ENCODE measurements at regions of chr9 and their contacts with region 1.

Region 1: GRCh38 chr9:89743573-89744361 is 139.0 kb downstream of the GADD45G start:
- DNase-seq: peak; percentile 23 to 82 (median 76)
- ATAC-seq: peak; percentile 88
- H3K4me3 ChIP-seq: peak overlapping the region; percentile 35
- H3K4me3 Mint-ChIP-seq: peak overlapping the region; percentile 62 to 85 (median 76)
- H3K27ac ChIP-seq: peak overlapping the region; percentile 37
- H3K27ac Mint-ChIP-seq: peak overlapping the region; percentile 49 to 94 (median 83)
- H3K4me1 ChIP-seq: peaks cover 18 to 65% of the 10 kb centered on the region in 2 donors
- H3K4me1 Mint-ChIP-seq: peaks cover 48 to 91% (median 87%) of the 10 kb centered on the region in 7 donors
- H3K27me3 ChIP-seq: no peaks in the 10 kb centered on the region
- H3K27me3 Mint-ChIP-seq: no peaks in the 10 kb centered on the region

Region 2: GRCh38 chr9:88025399-88026117 is 1718.2 kb before region 1 on chr9:
- CTCF ChIA-PET with region 1: no interaction called
- POLR2A ChIA-PET with region 1: no interaction called
- intact Hi-C with region 1: no loop called
- DNase-seq: no peak
- ATAC-seq: no peak
- H3K4me3 ChIP-seq: no peak overlapping the region
- H3K4me3 Mint-ChIP-seq: no peak overlapping the region
- H3K27ac ChIP-seq: no peak overlapping the region
- H3K27ac Mint-ChIP-seq: no peak overlapping the region
- H3K4me1 ChIP-seq: no peaks in the 10 kb centered on the region
- H3K4me1 Mint-ChIP-seq: peaks cover 0 to 1% (median 0%) of the 10 kb centered on the region in 7 donors
- H3K27me3 ChIP-seq: no peaks in the 10 kb centered on the region
- H3K27me3 Mint-ChIP-seq: peaks cover 0 to 5% (median 0%) of the 10 kb centered on the region in 5 donors

Region 3: DNA sequence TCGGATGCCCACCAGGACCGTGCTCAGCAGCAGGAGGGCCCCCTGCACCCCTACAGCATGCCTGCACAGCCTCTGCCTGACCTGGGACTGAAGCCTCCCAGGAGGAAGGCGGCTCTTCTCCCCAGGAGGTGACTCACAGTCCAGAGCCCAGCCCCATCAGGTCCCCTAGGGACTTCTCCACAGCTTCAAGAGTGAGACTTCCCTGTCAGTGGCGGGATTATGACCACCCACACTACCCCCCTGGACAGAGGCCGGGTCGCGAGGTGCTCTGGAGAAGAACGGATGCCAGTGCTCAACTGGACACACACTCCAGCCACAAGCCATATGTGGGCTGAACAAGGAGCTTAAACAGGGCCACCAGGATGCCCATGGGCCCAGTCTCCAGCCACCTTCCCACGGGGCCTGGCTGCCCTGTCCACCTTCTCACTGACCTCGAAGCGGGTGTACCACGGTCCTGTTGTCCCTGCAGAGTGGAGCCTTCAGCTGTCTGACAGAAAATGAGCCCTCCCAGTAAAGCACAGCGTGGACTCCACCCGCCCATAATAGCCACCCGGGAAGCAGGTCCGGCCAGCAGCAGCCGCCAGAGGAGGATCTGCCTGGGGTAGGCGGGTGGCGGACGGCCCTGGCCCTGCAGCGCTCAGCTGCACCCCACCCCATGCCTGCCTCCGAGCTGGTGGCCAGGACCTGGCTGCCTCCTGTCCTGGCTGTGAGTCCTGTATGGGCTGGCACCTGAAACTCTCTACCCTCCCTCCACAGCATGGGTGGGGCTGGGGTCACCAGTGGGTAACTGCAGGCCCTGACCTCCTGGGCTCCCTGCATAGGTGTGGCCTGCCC is 300.6 kb before region 1 on chr9:
- CTCF ChIA-PET with region 1: no interaction called
- POLR2A ChIA-PET with region 1: interaction called, 3 read pairs
- intact Hi-C with region 1: loop called in 1 of 2 experiments (anchors 5 kb)
- DNase-seq: no peak
- ATAC-seq: peak; percentile 36
- H3K4me3 ChIP-seq: no peak overlapping the region
- H3K4me3 Mint-ChIP-seq: peak overlapping the region in 3 of 10 donors; percentile 54 to 82 (median 67)
- H3K27ac ChIP-seq: peak overlapping the region; percentile 72
- H3K27ac Mint-ChIP-seq: peak overlapping the region; percentile 76 to 99 (median 96)
- H3K4me1 ChIP-seq: peaks cover 84 to 89% of the 10 kb centered on the region in 2 donors
- H3K4me1 Mint-ChIP-seq: peaks cover 62 to 91% (median 85%) of the 10 kb centered on the region in 7 donors
- H3K27me3 ChIP-seq: no peaks in the 10 kb centered on the region
- H3K27me3 Mint-ChIP-seq: no peaks in the 10 kb centered on the region

Region 4: GRCh38 chr9:89648247-89649000 is 95.3 kb before region 1 on chr9:
- CTCF ChIA-PET with region 1: no interaction called
- POLR2A ChIA-PET with region 1: no interaction called
- intact Hi-C with region 1: no loop called
- DNase-seq: no peak
- ATAC-seq: no peak
- H3K4me3 ChIP-seq: no peak overlapping the region
- H3K4me3 Mint-ChIP-seq: no peak overlapping the region
- H3K27ac ChIP-seq: no peak overlapping the region
- H3K27ac Mint-ChIP-seq: no peak overlapping the region
- H3K4me1 ChIP-seq: no peaks in the 10 kb centered on the region
- H3K4me1 Mint-ChIP-seq: peaks cover 0 to 13% (median 0%) of the 10 kb centered on the region in 7 donors
- H3K27me3 ChIP-seq: no peaks in the 10 kb centered on the region
- H3K27me3 Mint-ChIP-seq: peaks cover 0 to 30% (median 0%) of the 10 kb centered on the region in 5 donors

Region 5: GRCh38 chr9:89661956-89662717 is 81.6 kb before region 1 on chr9:
- CTCF ChIA-PET with region 1: no interaction called
- POLR2A ChIA-PET with region 1: no interaction called
- intact Hi-C with region 1: loop called in 1 of 2 experiments (anchors 1 kb)
- DNase-seq: no peak
- ATAC-seq: peak; percentile 61
- H3K4me3 ChIP-seq: no peak overlapping the region
- H3K4me3 Mint-ChIP-seq: no peak overlapping the region
- H3K27ac ChIP-seq: no peak overlapping the region
- H3K27ac Mint-ChIP-seq: no peak overlapping the region
- H3K4me1 ChIP-seq: no peaks in the 10 kb centered on the region
- H3K4me1 Mint-ChIP-seq: peaks cover 0 to 39% (median 0%) of the 10 kb centered on the region in 7 donors
- H3K27me3 ChIP-seq: no peaks in the 10 kb centered on the region
- H3K27me3 Mint-ChIP-seq: peaks cover 0 to 17% (median 4%) of the 10 kb centered on the region in 5 donors

Region 6: GRCh38 chr9:89714321-89714720 is 29.4 kb before region 1 on chr9:
- CTCF ChIA-PET with region 1: no interaction called
- POLR2A ChIA-PET with region 1: interaction called, 4 read pairs
- intact Hi-C with region 1: loop called in 1 of 2 experiments (anchors 2 kb)
- DNase-seq: no peak
- ATAC-seq: no peak
- H3K4me3 ChIP-seq: no peak overlapping the region
- H3K4me3 Mint-ChIP-seq: peak overlapping the region in 1 of 10 donors; percentile 53
- H3K27ac ChIP-seq: no peak overlapping the region
- H3K27ac Mint-ChIP-seq: peak overlapping the region in 1 of 9 donors; percentile 81
- H3K4me1 ChIP-seq: peaks cover 0 to 9% of the 10 kb centered on the region in 2 donors
- H3K4me1 Mint-ChIP-seq: peaks cover 2 to 70% (median 14%) of the 10 kb centered on the region in 7 donors
- H3K27me3 ChIP-seq: no peaks in the 10 kb centered on the region
- H3K27me3 Mint-ChIP-seq: no peaks in the 10 kb centered on the region

Region 7: GRCh38 chr9:89791754-89792153 is 48.0 kb after region 1 on chr9:
- CTCF ChIA-PET with region 1: no interaction called
- POLR2A ChIA-PET with region 1: no interaction called
- intact Hi-C with region 1: loop called in 1 of 2 experiments (anchors 5 kb)
- DNase-seq: no peak
- ATAC-seq: no peak
- H3K4me3 ChIP-seq: no peak overlapping the region
- H3K4me3 Mint-ChIP-seq: no peak overlapping the region
- H3K27ac ChIP-seq: no peak overlapping the region
- H3K27ac Mint-ChIP-seq: no peak overlapping the region
- H3K4me1 ChIP-seq: no peaks in the 10 kb centered on the region
- H3K4me1 Mint-ChIP-seq: peaks cover 0 to 8% (median 0%) of the 10 kb centered on the region in 7 donors
- H3K27me3 ChIP-seq: no peaks in the 10 kb centered on the region
- H3K27me3 Mint-ChIP-seq: peaks cover 0 to 11% (median 0%) of the 10 kb centered on the region in 5 donors

Region 8: GRCh38 chr9:89825669-89826068 is 81.9 kb after region 1 on chr9:
- CTCF ChIA-PET with region 1: no interaction called
- POLR2A ChIA-PET with region 1: no interaction called
- intact Hi-C with region 1: loop called in 1 of 2 experiments (anchors 1 kb)
- DNase-seq: no peak
- ATAC-seq: no peak
- H3K4me3 ChIP-seq: no peak overlapping the region
- H3K4me3 Mint-ChIP-seq: no peak overlapping the region
- H3K27ac ChIP-seq: no peak overlapping the region
- H3K27ac Mint-ChIP-seq: no peak overlapping the region
- H3K4me1 ChIP-seq: no peaks in the 10 kb centered on the region
- H3K4me1 Mint-ChIP-seq: peaks cover 12 to 26% (median 18%) of the 10 kb centered on the region in 7 donors
- H3K27me3 ChIP-seq: no peaks in the 10 kb centered on the region
- H3K27me3 Mint-ChIP-seq: peaks cover 0 to 8% (median 0%) of the 10 kb centered on the region in 5 donors